Activated T-helper 1 cell treated with anti-CD3 and anti-CD28 coated beads, Interleukin-12 subunit alpha, Interleukin-12 subunit beta, Interleukin-2, Interleukin-4 antibody, amounts not matched to agents 30 ng/mL and 10 ng/mL and 1 ng/mL, durations not matched to agents 14 hours and 24 hours and 36 hours (primary cell): ENCODE measurements at regions of chr18 and their contacts with region 1.

Region 1: GRCh38 chr18:3245853-3246634 is 1.6 kb upstream of the MYL12A start:
- DNase-seq: peak; percentile 79
- H3K4me3 Mint-ChIP-seq: peak overlapping the region; percentile 93
- H3K27ac Mint-ChIP-seq: peak overlapping the region; percentile 99
- H3K4me1 Mint-ChIP-seq: peaks cover 42% of the 10 kb centered on the region
- H3K27me3 Mint-ChIP-seq: peaks cover 2% of the 10 kb centered on the region

Region 2: DNA sequence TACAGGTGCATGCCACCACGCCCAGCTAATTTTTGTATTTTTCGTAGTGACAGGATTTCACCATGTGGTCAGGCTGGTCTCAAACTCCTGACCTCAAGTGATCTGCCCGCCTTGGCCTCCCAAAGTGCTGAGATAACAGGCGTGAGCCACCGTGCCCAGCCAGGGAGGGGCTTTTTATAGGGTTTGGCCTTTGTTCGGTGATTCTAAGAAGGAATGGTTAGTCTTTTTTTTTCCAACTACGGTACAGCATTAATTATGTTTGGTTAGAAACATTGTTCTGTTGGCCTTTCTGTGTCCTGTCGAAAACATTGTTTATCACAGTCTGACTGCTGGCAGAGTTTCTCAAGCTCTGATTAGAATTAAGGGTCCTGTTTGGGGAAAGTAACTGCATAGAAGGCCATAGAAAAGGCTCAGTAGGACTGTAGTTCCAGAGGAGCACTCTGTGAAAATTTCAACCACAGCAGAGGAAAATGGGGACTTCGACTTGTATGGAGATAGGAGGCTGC is 609.9 kb before region 1 on chr18:
- intact Hi-C with region 1: loop called (anchors 1 kb)
- DNase-seq: no peak
- H3K4me3 Mint-ChIP-seq: peak overlapping the region; percentile 85
- H3K27ac Mint-ChIP-seq: peak overlapping the region; percentile 99
- H3K4me1 Mint-ChIP-seq: peaks cover 71% of the 10 kb centered on the region
- H3K27me3 Mint-ChIP-seq: no peaks in the 10 kb centered on the region

Region 3: GRCh38 chr18:2846636-2847364 is 399.2 kb before region 1 on chr18 and contains the start of gene EMILIN2:
- intact Hi-C with region 1: loop called (anchors 2 kb)
- DNase-seq: peak; percentile 3
- H3K4me3 Mint-ChIP-seq: peak within 1 kb of the TSS; percentile 89
- H3K27ac Mint-ChIP-seq: peak within 1 kb of the TSS; percentile 82
- H3K4me1 Mint-ChIP-seq: peaks cover 26% of the 10 kb centered on the region
- H3K27me3 Mint-ChIP-seq: peaks cover 50% of the 10 kb centered on the region
- total RNA-seq, gene EMILIN2: 26.1 and 28.0 TPM in 2 replicates

Region 4: DNA sequence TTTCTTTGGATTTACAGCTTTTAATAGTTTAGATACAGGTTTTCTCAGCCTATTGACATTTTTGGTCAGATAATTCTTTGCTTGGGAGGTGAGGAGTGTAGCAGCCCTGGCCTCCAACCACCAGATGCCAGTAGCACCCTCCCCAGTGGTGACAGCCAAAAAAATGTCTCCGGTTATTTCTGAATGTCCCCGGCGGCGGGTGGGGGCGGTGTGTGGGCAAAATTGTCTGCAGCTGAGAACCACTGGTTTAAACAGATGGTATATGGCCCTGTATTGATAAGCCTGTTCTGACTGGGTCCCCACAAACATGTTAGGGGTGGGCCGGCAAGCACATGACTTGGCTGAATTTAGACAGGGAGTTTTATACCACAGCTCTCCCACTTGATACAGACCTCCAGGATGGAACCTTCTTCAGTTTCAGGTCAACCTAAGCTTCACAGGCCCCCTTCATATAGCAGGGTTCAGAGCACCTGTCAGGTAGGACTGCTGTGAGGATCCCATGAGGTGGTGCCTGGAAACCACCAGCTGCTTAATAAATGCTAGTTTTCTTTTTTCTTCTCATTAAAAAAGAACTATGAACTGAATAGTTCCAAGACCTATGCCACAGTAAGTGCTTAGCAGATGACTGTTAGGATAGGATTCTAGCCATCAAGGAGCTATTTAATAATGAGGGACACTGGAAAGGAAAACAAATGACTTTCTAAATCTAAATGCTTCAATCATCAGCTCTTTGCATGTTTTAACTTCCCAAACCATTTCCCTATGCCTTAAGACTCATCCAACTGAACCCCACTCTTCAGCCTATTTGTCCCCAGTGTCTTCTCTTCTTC is 251.2 kb before region 1 on chr18:
- intact Hi-C with region 1: loop called (anchors 1 kb)
- DNase-seq: peak; percentile 58
- H3K4me3 Mint-ChIP-seq: peak overlapping the region; percentile 60
- H3K27ac Mint-ChIP-seq: peak overlapping the region; percentile 83
- H3K4me1 Mint-ChIP-seq: peaks cover 82% of the 10 kb centered on the region
- H3K27me3 Mint-ChIP-seq: no peaks in the 10 kb centered on the region

Region 5: GRCh38 chr18:3129053-3129864 is 116.8 kb before region 1 on chr18:
- intact Hi-C with region 1: loop called (anchors 1 kb)
- DNase-seq: peak; percentile 70
- H3K4me3 Mint-ChIP-seq: no peak overlapping the region
- H3K27ac Mint-ChIP-seq: peak overlapping the region; percentile 27
- H3K4me1 Mint-ChIP-seq: peaks cover 10% of the 10 kb centered on the region
- H3K27me3 Mint-ChIP-seq: peaks cover 3% of the 10 kb centered on the region

Region 6: GRCh38 chr18:3297025-3297984 is 51.3 kb after region 1 on chr18:
- intact Hi-C with region 1: loop called (anchors 1 kb)
- DNase-seq: peak; percentile 89
- H3K4me3 Mint-ChIP-seq: peak overlapping the region; percentile 91
- H3K27ac Mint-ChIP-seq: peak overlapping the region; percentile 82
- H3K4me1 Mint-ChIP-seq: peaks cover 15% of the 10 kb centered on the region
- H3K27me3 Mint-ChIP-seq: peaks cover 33% of the 10 kb centered on the region

Region 7: DNA sequence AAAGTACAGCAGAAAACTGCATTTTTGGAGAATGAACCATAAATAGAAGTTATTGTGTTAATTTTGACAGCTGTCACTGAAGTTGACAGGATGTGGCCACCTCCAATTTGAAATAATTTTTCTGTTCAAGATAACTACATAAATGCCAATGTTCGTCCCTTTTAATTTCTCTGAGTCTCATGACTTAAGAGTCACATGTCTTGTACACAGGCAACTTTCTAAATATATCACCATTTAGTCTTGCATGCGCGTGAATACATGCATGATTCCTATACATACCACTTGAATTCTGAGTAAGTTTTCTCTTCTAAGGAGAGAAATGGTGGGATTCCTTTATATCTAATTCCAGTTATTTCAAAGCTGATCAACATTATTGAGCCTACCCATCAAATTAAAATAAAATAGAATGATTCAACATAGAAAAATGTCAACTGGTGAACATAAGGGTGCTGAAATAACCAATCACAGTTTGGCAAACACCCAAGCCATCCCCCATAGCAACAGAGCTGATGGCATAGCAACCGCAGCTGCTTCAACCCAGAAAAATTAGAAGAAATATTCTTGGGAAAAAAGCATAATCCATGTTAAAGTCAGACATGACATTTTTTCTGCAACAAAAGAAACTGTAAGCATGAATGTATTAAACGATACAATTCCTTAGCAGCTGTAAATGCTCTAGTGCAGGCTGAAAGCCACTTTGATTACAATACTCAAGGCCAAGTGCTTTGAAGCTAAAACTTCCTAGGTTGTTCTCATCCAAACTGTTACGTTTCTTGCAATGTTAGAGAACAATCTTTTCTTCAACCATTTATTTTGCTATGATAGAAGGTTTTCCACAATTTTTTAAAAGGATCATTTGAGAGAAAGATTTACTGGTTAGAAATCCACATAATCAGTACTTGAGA is 926.4 kb after region 1 on chr18:
- intact Hi-C with region 1: no loop called
- DNase-seq: no peak
- H3K4me3 Mint-ChIP-seq: no peak overlapping the region
- H3K27ac Mint-ChIP-seq: no peak overlapping the region
- H3K4me1 Mint-ChIP-seq: no peaks in the 10 kb centered on the region
- H3K27me3 Mint-ChIP-seq: no peaks in the 10 kb centered on the region